ENCODE measurements at regions of chr2 and their contacts with region 1.

Region 1: GRCh38 chr2:12716282-12717190 is at the start of gene TRIB2:
- DNase-seq: peak; percentile 91 to 94
- ATAC-seq: peak; percentile 80
- H3K4me3 ChIP-seq: peak within 1 kb of the TSS; percentile 92 to 95
- H3K27ac ChIP-seq: peak within 1 kb of the TSS; percentile 90 to 92
- H3K4me1 ChIP-seq: no peaks in the 10 kb centered on the region
- H3K27me3 ChIP-seq: no peaks in the 10 kb centered on the region
- total RNA-seq, gene TRIB2: 39.7 to 63.4 TPM

Region 2: GRCh38 chr2:12169721-12170120 is 546.8 kb before region 1 on chr2:
- intact Hi-C with region 1: loop called in 1 of 2 experiments (anchors 10 kb)
- DNase-seq: peak; percentile 81 to 90
- ATAC-seq: peak; percentile 68
- H3K4me3 ChIP-seq: no peak overlapping the region
- H3K27ac ChIP-seq: no peak overlapping the region
- H3K4me1 ChIP-seq: peaks cover 0 to 7% of the 10 kb centered on the region in 2 donors
- H3K27me3 ChIP-seq: peaks cover 0 to 1% of the 10 kb centered on the region in 2 donors

Region 3: DNA sequence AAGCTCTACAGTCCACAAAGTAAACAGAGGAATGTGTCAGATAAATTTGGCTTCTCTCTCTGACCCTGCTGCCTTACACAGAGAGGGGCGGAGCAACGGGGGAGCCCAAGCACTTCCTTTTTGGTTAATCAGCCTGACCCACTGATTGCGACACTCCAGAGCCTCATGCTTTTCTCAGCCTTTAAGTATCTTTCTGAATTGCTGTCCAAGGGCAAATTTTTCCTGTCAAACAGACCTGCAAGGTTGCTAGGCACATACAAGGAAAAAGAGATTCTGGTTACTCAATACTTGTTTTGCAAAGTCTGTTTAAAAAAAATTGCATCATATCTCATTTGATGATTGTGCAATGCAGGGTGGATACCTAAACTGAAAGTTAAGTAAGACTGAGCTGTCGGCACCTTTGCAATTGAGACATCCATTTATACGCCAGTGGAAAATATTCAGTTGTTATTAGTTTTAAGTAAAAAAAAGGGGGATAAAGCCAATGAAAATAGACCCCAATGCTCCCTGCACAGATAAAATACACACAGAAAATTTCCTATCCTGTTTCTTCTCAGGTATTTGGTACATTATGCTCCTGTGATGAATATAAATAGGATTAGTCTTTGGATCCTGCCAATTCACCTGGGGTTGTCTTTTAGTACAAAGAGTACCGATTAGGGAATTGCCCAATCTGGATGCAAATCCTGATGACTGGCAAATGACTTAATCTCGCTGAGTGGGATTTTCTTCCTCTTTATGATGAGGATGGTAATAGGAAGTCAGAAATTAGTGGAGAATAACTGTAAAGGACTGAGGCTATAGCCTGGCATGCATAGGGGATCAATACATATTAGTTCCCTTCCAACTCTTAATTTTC is 260.0 kb before region 1 on chr2:
- intact Hi-C with region 1: loop called in 1 of 2 experiments (anchors 5 kb)
- DNase-seq: peak; percentile 88 to 94
- ATAC-seq: peak; percentile 92
- H3K4me3 ChIP-seq: no peak overlapping the region
- H3K27ac ChIP-seq: no peak overlapping the region
- H3K4me1 ChIP-seq: peaks cover 7 to 10% of the 10 kb centered on the region in 2 donors
- H3K27me3 ChIP-seq: no peaks in the 10 kb centered on the region

Region 4: DNA sequence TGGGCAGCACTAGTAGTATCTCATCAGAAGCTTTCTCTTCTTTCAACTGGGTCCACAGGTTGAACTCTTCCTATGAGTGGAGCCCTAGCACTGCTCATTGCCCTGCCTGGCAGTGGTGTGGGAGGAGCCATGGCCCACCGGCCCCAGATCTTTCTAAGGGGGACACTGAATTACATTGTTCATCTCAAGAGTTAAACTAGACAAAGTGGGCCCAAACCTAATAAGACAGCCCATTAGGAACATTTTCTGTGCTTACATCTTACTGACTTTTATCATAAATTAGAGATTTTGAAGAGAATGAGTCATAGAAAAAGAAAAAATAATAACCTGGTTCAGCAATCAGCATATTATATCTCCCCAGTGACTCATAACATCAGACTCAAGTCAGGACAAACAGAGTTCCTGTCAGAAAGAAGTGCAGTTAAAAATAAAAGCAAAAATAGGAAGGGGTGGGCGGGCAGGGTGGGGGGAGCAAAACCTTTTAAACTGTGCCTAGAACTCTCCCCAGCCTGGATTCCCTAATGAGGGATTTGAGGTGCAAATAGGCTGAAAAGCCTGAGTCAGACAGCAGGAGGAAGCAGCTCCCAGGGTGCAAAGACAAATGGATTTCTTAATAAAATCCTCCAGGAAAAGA is 161.4 kb before region 1 on chr2:
- intact Hi-C with region 1: loop called (anchors 5 kb)
- DNase-seq: no peak
- ATAC-seq: peak; percentile 76
- H3K4me3 ChIP-seq: no peak overlapping the region
- H3K27ac ChIP-seq: no peak overlapping the region
- H3K4me1 ChIP-seq: peaks cover 7 to 10% of the 10 kb centered on the region in 2 donors
- H3K27me3 ChIP-seq: no peaks in the 10 kb centered on the region

Region 5: GRCh38 chr2:12918835-12919445 is 202.4 kb after region 1 on chr2:
- intact Hi-C with region 1: loop called in 1 of 2 experiments (anchors 5 kb)
- DNase-seq: peak; percentile 78
- ATAC-seq: peak; percentile 77
- H3K4me3 ChIP-seq: peak overlapping the region in 1 of 2 donors; percentile 34
- H3K27ac ChIP-seq: peak overlapping the region; percentile 91 to 93
- H3K4me1 ChIP-seq: peaks cover 4 to 9% of the 10 kb centered on the region in 2 donors
- H3K27me3 ChIP-seq: no peaks in the 10 kb centered on the region